ENCODE measurements at regions of chr6 and their contacts with region 1.

Region 1: GRCh38 chr6:12137480-12137879 is 125.4 kb downstream of the HIVEP1 start:
- DNase-seq: no peak
- ATAC-seq: no peak
- H3K4me3 Mint-ChIP-seq: no peak overlapping the region
- H3K27ac Mint-ChIP-seq: no peak overlapping the region
- H3K4me1 Mint-ChIP-seq: peaks cover 4% of the 10 kb centered on the region
- H3K27me3 Mint-ChIP-seq: no peaks in the 10 kb centered on the region
- CTCF ChIP-seq: no peak

Region 2: GRCh38 chr6:12103158-12103557 is 34.3 kb before region 1 on chr6:
- CTCF ChIA-PET with region 1: no interaction called
- POLR2A ChIA-PET with region 1: no interaction called
- intact Hi-C with region 1: loop called (anchors 5 kb)
- DNase-seq: no peak
- ATAC-seq: no peak
- H3K4me3 Mint-ChIP-seq: no peak overlapping the region
- H3K27ac Mint-ChIP-seq: no peak overlapping the region
- H3K4me1 Mint-ChIP-seq: peaks cover 16% of the 10 kb centered on the region
- H3K27me3 Mint-ChIP-seq: no peaks in the 10 kb centered on the region
- CTCF ChIP-seq: no peak

Region 3: DNA sequence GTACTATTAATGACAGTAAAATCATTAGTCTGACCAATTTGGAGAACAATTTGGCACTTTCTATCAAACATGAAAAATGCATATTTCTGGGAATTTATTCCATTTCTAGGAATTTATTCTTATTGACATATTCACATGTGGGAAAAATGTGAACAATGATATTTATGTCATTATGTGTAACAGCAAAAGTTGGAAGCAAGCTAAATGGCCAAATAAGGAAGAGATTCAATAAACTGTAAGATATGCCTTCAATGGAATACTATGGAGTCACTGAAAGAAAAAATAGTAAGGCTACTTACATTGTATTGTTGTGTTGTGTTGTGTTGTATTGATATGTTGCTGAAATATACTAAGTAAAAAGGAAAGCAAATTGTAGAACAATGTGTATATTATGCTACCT is 52.2 kb after region 1 on chr6:
- CTCF ChIA-PET with region 1: no interaction called
- POLR2A ChIA-PET with region 1: no interaction called
- intact Hi-C with region 1: no loop called
- DNase-seq: no peak
- ATAC-seq: no peak
- H3K4me3 Mint-ChIP-seq: no peak overlapping the region
- H3K27ac Mint-ChIP-seq: no peak overlapping the region
- H3K4me1 Mint-ChIP-seq: no peaks in the 10 kb centered on the region
- H3K27me3 Mint-ChIP-seq: no peaks in the 10 kb centered on the region
- CTCF ChIP-seq: no peak

Region 4: GRCh38 chr6:12361042-12361765 is 223.7 kb after region 1 on chr6:
- CTCF ChIA-PET with region 1: no interaction called
- POLR2A ChIA-PET with region 1: no interaction called
- intact Hi-C with region 1: loop called (anchors 2 kb)
- DNase-seq: no peak
- ATAC-seq: no peak
- H3K4me3 Mint-ChIP-seq: no peak overlapping the region
- H3K27ac Mint-ChIP-seq: no peak overlapping the region
- H3K4me1 Mint-ChIP-seq: peaks cover 15% of the 10 kb centered on the region
- H3K27me3 Mint-ChIP-seq: no peaks in the 10 kb centered on the region
- CTCF ChIP-seq: no peak

Region 5: GRCh38 chr6:12383448-12383847 is 246.0 kb after region 1 on chr6:
- CTCF ChIA-PET with region 1: no interaction called
- POLR2A ChIA-PET with region 1: no interaction called
- intact Hi-C with region 1: no loop called
- DNase-seq: no peak
- ATAC-seq: no peak
- H3K4me3 Mint-ChIP-seq: no peak overlapping the region
- H3K27ac Mint-ChIP-seq: no peak overlapping the region
- H3K4me1 Mint-ChIP-seq: no peaks in the 10 kb centered on the region
- H3K27me3 Mint-ChIP-seq: peaks cover 5% of the 10 kb centered on the region
- CTCF ChIP-seq: no peak

Measured in activated B cell treated with CpG ODN at 0.5 μM for 24 hours (primary cell).